ENCODE measurements at regions of chr6 and their contacts with region 1.

Region 1: DNA sequence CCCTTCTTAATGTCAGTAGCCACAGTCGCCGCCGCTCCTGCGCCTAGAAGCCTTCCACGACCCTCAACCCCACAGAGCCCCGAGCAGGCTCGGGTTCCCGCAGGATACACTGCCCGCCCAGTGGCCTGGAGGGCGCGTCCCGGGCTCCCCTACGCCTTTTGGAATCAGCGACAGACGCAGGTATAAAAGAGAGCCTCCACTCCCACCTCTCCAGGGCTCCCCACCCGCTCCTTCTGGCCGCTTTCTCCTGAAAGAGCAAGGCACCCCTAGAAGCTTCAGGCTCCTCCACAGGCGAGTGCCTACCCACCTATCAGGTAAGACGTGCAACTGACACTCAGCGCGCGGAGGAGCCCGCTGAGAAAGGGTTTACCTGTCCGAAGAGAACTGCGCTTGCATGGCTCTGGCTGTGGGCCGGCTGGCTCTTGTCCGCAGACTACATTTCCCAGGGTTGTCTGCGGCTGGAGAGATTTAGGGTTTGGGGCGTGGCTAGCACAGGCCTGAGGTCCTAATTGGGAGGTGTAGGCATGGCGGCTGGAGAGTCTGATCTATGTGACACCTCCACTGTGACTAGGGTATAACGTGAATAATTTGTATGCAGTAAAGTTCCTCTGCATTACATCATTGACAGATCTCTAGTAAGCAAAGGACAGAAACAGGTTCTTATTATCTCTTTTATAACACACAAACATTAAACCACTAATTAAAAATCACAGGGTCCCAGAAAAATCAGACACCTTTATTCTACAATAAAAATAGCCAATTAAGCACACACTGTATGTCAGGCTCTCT is 13.5 kb upstream of the ZNF391 start:
- DNase-seq: peak; percentile 89
- H3K4me3 ChIP-seq: peak overlapping the region; percentile 64 to 90 (median 78)
- H3K27ac ChIP-seq: peak overlapping the region; percentile 55
- H3K4me1 ChIP-seq: peaks cover 11% of the 10 kb centered on the region
- H3K27me3 ChIP-seq: no peaks in the 10 kb centered on the region
- CTCF ChIP-seq: no peak

Region 2: GRCh38 chr6:27332692-27333641 is 42.1 kb before region 1 on chr6:
- CTCF ChIA-PET with region 1: no interaction called
- dilution Hi-C with region 1: no loop called
- in situ Hi-C with region 1: no loop called
- intact Hi-C with region 1: loop called (anchors 1 kb)
- DNase-seq: peak; percentile 76
- H3K4me3 ChIP-seq: peak overlapping the region; percentile 45 to 76 (median 72)
- H3K27ac ChIP-seq: no peak overlapping the region
- H3K4me1 ChIP-seq: peaks cover 3% of the 10 kb centered on the region
- H3K27me3 ChIP-seq: no peaks in the 10 kb centered on the region
- CTCF ChIP-seq: no peak

Measured in mammary epithelial cell (primary cell).